AG04450 (cell line): ENCODE measurements at regions of chr5 and their contacts with region 1.

Region 1: DNA sequence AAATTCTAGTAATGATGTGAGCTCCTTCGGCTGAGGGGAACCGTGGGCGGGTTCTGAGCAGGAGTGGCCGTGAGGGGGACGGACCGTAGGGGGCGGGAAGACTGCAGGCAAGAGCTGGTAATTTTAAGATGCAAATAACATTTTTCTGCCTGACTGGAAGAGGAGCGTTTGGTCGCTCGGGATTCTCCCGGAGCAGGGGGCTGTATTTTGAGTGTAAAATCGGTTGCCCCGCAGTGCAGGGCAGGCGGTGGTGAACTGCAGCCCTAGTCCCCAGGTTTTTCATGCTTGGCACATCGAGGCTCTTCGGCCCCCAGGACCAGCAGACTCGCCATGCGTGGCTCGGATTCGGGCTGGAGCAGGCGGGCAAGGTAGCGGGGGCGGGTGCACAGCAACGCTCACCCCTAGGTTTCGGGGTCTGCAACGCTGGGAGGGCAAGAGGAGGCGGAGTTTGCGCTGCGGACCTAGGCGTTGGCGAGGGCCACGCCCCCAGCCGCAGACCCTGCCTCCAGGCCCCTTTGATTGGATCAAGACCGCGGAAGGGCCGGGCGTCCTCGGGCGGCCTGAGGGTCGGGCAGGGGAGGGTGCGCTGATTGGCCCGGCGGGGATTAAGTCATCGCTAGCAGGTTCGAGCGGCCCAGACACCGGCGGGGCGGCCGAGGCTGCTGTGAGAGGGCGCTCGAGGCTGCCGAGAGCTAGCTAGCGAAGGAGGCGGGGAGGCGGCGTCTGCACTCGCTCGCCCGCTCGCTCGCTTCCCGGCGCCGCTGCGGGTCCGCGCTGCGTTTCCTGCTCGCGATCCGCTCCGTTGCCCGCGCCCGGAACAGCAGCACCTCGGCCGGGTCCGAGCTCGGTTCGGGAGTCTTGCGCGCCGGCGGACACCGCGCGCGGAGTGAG is at the start of gene ARHGAP26:
- DNase-seq: peak; percentile 77
- H3K4me3 ChIP-seq: peak within 1 kb of the TSS; percentile 92
- H3K27ac ChIP-seq: no peak within 1 kb of the TSS
- H3K27me3 ChIP-seq: peaks cover 38% of the 10 kb centered on the region
- CTCF ChIP-seq: peak; percentile 34
- polyA plus RNA-seq, gene ARHGAP26: 0.56 and 0.77 TPM in 2 replicates

Region 2: DNA sequence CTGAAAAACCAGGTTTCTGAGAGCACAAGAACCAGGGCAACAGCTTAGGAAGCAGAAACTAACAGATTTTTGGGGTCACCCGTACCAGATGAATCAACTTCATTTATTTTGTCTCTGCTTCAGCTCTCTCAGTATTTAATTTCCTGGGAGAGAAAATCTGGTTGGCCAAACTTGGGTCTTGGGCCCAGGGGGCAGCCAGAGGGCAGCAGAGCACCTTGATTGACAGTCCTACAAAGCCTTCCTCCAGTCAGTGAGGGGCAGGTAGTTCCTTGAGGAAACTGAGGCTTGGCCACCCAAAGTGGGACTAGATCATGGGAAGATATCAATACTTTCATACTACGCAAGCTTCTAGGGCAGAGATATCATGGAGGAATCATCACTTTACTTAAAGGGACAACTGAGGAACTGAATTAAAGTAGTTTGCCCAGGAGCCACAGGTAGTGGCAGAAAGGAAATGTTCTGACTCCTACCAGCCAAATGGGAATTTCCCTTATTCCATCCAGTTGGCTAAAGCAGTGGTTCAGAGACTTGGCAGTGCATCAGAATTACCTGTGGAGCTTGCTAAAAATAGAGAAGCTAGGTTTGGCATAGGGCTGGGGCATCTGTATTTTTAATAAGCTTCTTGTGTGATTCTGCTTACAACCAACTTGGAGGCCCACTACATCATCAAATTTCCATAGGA is 21.3 kb before region 1 on chr5:
- CTCF ChIA-PET with region 1: interaction called, 19 read pairs
- POLR2A ChIA-PET with region 1: no interaction called
- DNase-seq: no peak
- H3K4me3 ChIP-seq: no peak overlapping the region
- H3K27ac ChIP-seq: no peak overlapping the region
- H3K27me3 ChIP-seq: no peaks in the 10 kb centered on the region
- CTCF ChIP-seq: peak; percentile 19; the same call in 1 of the 2 replicates

Region 3: DNA sequence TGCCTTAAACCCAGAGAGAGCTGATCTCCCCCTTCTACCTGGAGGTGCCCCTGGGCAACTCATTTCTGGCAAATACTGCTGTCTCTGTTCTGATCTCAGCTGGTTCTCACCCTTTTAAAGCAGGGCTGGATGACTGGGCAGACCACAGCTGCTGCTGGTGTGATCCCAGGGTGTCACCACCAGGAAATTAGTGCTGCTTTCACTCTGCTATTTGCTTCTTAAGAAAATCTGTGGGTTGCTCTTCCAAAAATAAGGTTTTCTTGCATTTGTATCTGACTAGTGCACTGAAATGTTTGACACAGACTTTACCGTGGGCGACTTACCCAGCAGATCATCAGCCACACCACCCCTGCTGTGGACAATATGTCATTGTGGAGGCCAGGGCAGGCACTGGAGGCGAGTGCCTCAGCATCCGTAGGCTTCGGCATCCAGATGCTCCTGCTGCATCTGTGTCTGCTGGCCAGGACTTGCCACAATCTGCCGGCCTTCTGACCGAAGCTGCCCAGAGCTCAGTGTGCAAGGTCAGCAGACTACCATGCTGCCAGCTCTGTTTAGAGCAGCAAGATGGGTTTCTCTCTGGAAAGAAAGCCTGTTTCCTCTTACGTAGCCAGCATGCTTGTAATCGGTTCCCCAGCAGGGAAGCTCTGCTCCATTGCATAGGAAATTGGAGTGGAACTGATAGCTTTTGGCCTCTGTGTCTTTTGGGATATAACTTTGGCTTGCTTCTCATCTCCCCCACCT is 13.8 kb after region 1 on chr5:
- CTCF ChIA-PET with region 1: interaction called, 10 read pairs
- POLR2A ChIA-PET with region 1: interaction called, 3 read pairs
- DNase-seq: no peak
- H3K4me3 ChIP-seq: no peak overlapping the region
- H3K27ac ChIP-seq: no peak overlapping the region
- H3K27me3 ChIP-seq: peaks cover 24% of the 10 kb centered on the region
- CTCF ChIP-seq: no peak

Region 4: DNA sequence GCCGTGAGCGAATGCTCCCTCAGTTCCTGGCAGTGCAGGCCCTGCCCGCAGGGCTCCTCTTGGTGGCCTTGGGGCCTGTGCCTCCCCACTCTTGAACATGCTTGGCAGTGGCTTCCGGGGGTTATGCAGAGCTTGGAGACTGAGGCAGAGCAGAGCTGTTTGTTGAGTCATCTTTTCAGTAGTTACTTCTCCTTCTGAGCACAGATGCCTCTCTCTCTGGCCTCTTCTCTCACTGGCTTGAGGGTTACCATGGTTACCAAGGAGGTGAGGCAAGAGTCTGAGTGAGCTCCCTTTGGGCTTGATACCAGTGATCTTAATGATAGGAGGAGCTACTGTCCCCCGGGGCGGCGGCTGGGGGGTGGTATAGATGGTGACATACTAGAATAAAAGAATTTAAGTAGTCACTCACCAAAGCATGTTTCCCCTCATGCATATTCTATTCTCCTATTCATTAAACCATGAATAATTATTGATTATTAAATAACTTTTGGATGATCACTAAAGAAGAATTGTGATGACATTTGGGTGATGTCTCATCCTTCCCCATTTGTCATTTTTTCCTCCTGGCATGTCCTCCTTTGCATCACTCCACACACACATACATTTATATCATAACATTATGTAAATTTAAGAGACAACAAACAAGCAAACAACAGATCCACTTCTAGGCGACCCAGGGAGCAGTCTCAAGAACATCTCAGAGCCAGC is 111.2 kb after region 1 on chr5:
- CTCF ChIA-PET with region 1: interaction called, 18 read pairs
- POLR2A ChIA-PET with region 1: interaction called, 3 read pairs
- DNase-seq: peak; percentile 65
- H3K4me3 ChIP-seq: no peak overlapping the region
- H3K27ac ChIP-seq: no peak overlapping the region
- H3K27me3 ChIP-seq: peaks cover 4% of the 10 kb centered on the region
- CTCF ChIP-seq: no peak